ENCODE measurements at regions of chr2 and their contacts with region 1.

Region 1: DNA sequence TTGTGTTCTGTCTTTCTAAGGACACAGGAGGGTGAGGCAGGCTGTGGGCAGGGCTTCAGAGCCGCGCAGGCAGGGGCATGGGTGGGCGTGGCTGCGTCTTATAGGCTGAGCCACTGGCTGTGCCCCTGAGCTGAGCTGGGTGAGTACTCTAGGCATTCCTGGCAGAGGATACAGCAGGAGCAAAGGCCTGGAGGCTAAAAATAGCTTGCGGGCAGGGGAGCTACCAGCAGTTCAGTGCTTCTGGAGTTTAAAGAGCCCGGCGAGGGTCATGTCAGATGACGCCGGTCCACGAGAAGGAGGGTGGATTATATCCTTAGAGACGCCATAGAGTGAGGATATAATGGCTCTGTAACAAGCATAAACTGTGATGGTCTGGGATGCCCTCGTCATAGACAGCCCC is 31.5 kb upstream of the PDIA6 start:
- DNase-seq: peak; percentile 88
- ATAC-seq: peak; percentile 89

Region 2: GRCh38 chr2:10810202-10811161 is 33.6 kb before region 1 on chr2:
- intact Hi-C with region 1: no loop called
- DNase-seq: no peak
- ATAC-seq: no peak

Region 3: GRCh38 chr2:10863837-10864236 is 19.7 kb after region 1 on chr2:
- intact Hi-C with region 1: loop called (anchors 2 kb)
- DNase-seq: no peak
- ATAC-seq: no peak

Region 4: DNA sequence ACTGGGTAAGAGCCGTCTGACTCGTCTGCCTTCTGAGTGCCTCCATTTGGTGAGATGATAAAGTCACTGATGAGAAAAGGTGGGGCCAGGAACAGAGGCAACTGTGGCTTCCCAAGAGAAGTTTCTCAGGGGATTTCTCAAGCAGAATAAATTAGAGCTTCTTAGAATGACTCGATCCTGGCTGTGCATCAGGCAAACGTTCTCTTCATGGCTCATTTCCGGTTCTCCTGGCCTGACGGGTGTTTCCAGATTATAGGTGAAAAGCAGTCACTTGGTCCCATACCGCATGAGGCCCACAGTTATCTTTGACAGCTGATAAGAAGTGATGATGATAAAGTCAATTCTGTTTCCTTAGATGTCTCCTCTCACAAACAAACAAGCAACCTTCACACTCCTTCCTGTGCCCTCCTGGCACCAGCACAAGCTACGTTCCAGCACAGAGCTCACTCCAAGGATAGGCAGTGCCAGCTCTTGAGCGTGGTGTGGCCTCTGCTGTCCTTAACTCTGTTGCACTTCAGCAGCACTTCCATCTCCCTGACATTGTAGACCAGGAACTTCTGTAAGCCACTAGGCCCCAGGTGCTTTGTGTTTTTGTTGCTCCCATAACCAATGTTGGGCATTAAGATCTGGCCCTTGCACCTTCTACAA is 29.8 kb after region 1 on chr2:
- intact Hi-C with region 1: loop called (anchors 1 kb)
- DNase-seq: no peak
- ATAC-seq: peak; percentile 91

Region 5: DNA sequence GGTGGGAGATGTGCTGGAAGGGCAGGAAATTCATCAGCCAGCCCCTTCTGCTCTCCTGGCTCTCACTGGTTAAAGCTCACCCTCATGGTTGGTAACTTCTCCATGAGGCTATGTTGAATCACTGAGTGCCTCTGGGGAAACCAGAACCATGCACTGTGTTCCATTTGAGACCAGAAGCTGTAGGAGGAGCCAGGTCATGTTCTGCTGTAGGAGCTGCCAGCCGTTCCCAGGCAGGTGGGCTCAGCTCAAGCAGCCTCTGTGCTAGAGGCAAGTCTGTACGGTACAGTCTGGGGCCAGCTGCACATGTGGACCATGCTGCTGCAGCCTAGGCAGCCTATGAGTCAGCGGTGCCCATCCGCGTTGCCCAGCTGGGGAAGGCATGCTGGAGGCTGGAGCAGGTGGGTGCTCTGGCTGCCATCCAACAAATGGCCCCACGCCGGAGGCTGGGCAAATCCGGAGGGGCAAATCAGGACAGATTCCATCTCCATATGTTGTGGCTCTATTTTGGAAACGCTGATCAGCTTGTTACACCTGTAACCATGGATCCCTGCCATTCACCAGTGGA is 45.6 kb after region 1 on chr2:
- intact Hi-C with region 1: loop called (anchors 5 kb)
- DNase-seq: no peak
- ATAC-seq: peak; percentile 30

Region 6: GRCh38 chr2:11012131-11012693 is 168.1 kb after region 1 on chr2:
- intact Hi-C with region 1: no loop called
- DNase-seq: no peak
- ATAC-seq: no peak

Region 7: DNA sequence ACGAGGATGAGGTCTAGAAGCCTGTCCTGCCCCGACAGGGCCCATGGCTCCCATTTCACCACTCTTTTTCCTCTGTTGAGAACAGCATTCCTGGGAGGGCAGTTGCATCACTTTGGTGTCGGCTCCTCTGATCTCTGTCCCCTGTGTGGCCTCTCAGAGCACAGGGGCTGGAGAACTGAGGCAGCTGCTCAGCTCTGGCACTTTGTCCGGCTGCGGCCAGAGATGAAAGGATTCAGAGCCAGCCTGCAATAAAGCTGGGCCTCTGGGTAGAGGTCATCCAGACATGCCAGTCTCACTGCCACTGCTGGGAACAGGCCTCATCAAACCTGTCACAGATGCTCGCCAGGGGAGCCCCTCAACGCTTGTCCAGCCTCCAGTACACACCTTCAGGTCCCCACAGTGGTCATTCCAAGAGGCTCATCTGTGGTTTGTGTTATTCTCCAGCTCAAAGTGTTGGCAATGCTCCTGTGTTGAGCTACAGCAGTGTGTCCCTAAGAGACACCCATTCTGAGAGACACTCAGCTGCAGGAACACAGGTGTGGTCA is 513.4 kb after region 1 on chr2:
- intact Hi-C with region 1: no loop called
- DNase-seq: no peak
- ATAC-seq: peak; percentile 56

Region 8: DNA sequence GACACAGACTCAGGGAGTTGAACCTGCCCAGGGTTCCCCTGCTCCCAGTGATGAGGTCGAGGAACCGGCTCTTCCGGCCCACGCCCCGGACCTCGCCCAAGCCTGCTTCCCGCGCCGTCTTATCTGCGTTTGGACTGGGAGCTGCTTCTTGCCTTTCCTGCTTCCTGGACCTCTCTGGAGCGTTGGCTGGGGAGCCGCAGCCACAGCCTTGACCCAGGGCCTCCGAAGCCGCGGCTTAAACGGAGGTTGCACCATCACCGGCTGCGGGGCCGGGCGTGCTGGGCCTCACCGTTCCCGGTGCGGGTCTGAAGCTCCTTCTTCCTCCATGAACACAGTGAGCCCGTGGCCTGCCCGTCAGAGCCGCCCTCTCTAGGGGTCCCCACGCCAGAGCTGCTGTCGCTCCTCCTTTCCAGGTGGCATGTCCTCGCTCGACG is 812.6 kb after region 1 on chr2:
- intact Hi-C with region 1: no loop called
- DNase-seq: no peak
- ATAC-seq: no peak